Gastrocnemius medialis (tissue), 4 donors: ENCODE measurements at regions of chr9 and their contacts with region 1.

Region 1: GRCh38 chr9:136849038-136849959 is at the start of gene PHPT1:
- DNase-seq: peak; percentile 99
- ATAC-seq: peak; percentile 84 to 85
- H3K4me3 ChIP-seq: peak within 1 kb of the TSS; percentile 73 to 86 (median 82)
- H3K27ac ChIP-seq: peak within 1 kb of the TSS; percentile 89 to 97 (median 92)
- H3K4me1 ChIP-seq: peaks cover 20 to 32% of the 10 kb centered on the region in 2 donors
- H3K27me3 ChIP-seq: peaks cover 4 to 16% (median 11%) of the 10 kb centered on the region in 3 donors
- CTCF ChIP-seq: no peak
- POLR2A ChIP-seq: peak; percentile 85 to 91
- total RNA-seq, gene PHPT1: 98.8 to 204 (median 152) TPM

Region 2: DNA sequence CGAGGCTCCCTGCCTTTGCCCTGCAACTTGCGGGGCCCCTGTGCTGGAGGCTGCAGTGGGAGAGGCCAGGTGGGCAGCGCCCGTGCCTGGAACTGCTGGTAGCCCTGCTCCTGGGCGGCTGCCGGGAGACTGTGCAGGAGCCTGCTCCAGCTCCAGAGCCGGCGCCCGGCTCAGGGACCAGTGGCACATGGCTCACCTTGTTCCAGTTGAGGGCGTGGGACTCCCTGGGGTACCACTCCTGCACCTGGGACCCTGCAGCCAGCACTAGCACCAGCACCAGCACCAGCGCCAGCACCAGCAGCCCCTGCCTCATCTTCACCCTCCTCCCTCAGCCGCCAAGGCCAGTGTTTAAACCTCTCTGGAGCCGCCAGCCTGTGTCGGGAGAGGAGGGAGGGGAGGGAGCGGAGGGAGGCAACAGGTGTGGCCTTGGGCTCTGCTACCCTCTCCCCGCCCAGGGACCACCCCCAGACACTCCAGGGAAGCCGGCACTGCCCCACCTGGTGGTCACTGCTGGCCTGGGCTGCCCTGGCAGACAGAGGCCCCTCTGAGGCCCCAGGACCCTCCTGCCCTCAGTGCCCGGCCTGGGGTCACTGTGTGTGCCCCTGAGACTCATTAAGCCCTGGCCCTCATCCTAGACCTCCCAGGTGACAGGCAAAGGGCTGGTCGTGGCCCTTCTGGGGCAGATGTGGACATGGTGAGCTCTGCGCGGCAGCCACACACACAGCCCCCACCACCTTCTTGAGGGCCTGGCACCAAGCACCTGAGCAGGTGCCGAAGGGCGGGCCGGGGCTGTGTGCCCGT is 106.5 kb before region 1 on chr9 and contains the start of gene LCN10:
- in situ Hi-C with region 1: no loop called
- intact Hi-C with region 1: no loop called
- DNase-seq: no peak
- ATAC-seq: no peak
- H3K4me3 ChIP-seq: peak within 1 kb of the TSS in 1 of 4 donors; percentile 25
- H3K27ac ChIP-seq: no peak within 1 kb of the TSS
- H3K4me1 ChIP-seq: no peaks in the 10 kb centered on the region
- H3K27me3 ChIP-seq: peaks cover 28 to 42% (median 39%) of the 10 kb centered on the region in 3 donors
- CTCF ChIP-seq: no peak
- POLR2A ChIP-seq: no peak
- total RNA-seq, gene LCN10: 0.61 to 4.7 (median 1.6) TPM

Region 3: DNA sequence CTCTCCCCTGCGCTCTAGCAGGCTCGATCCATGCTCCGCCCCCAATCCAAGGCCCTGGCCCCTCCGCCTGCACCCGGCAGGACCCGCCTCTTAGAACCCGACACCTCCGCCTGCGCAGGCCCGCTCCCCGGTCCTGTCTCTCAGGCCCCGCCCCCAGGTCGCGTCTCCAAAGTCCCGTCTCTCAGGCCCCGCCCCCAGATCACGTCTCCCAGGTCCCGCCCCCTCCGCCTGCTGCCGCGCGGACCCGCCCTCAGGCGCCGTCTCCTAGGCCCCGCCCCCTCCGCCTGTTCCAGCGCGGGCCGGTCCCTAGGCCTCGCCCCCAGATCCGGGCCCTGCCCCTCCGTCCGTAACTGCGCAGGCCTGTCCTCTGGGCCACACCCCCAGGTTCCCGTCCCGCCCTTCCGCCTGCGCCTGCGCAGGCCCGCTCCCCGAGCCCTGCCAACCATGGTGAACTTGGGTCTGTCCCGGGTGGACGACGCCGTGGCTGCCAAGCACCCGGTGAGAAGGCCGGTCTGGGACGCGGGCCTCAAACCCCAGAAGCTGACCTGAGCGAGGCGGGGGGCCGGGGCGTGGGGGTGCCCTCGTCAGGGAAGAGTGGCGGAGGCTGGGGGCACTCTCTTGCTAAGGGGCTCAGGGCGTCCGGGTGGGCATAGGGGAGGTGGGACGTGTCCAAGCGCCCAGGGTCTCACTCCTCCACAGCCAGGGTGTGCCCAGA is 58.2 kb before region 1 on chr9 and contains the start of gene TMEM141:
- in situ Hi-C with region 1: no loop called
- intact Hi-C with region 1: loop called (anchors 5 kb)
- DNase-seq: peak; percentile 100
- ATAC-seq: peak; percentile 87 to 91
- H3K4me3 ChIP-seq: peak within 1 kb of the TSS; percentile 66 to 92 (median 81)
- H3K27ac ChIP-seq: peak within 1 kb of the TSS; percentile 94 to 99 (median 95)
- H3K4me1 ChIP-seq: peaks cover 12 to 18% of the 10 kb centered on the region in 2 donors
- H3K27me3 ChIP-seq: no peaks in the 10 kb centered on the region
- CTCF ChIP-seq: no peak
- POLR2A ChIP-seq: peak; percentile 60 to 82
- total RNA-seq, gene TMEM141: 46.9 to 70.2 (median 51.1) TPM

Region 4: DNA sequence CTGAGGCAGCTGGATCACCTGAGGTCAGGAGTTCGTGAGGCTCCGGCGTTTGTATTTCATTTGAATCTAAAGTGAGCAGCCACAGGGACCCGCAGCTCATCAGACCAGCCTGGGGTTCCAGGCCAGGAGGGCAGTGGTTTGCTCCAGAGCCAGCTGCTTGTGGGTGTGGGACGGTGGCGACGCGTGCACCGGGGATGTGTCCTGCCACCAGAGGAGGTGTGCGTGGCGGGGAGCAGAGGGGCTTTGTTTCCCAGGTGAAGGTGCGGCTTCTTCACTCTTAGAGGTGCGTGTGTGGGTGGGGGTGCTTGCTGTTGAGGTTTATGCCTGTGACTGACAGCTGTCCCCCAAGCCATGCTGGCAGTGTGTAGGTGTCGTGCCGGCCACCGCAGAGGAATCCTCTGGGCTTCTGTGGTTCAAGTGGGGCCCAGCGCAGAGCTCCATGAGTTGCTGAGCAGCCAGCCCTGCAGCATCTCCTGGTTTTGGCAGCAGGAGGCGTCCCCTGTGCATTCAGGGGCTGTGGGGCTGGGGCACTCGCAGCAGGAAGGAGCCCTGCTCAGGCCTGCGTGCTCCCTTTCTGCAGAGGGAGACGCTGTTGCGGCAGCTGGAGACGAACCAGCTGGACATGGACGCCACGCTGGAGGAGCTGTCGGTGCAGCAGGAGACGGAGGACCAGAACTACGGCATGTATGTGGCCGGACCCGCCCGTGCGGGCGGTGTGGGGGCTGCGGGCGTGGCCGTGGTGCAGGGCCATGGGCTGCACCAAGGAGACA is 14.0 kb before region 1 on chr9:
- in situ Hi-C with region 1: no loop called
- intact Hi-C with region 1: loop called (anchors 1 kb)
- DNase-seq: no peak
- ATAC-seq: no peak
- H3K4me3 ChIP-seq: no peak overlapping the region
- H3K27ac ChIP-seq: no peak overlapping the region
- H3K4me1 ChIP-seq: peaks cover 0 to 4% of the 10 kb centered on the region in 2 donors
- H3K27me3 ChIP-seq: no peaks in the 10 kb centered on the region
- CTCF ChIP-seq: no peak
- POLR2A ChIP-seq: no peak

Region 5: GRCh38 chr9:136885950-136886578 is 36.8 kb after region 1 on chr9 and contains the start of gene TRAF2:
- in situ Hi-C with region 1: no loop called
- intact Hi-C with region 1: loop called (anchors 1 kb)
- DNase-seq: peak; percentile 97 to 98
- ATAC-seq: peak; percentile 97 to 98
- H3K4me3 ChIP-seq: peak within 1 kb of the TSS; percentile 75 to 91 (median 82)
- H3K27ac ChIP-seq: peak within 1 kb of the TSS; percentile 84 to 92 (median 90)
- H3K4me1 ChIP-seq: peaks cover 13 to 14% of the 10 kb centered on the region in 2 donors
- H3K27me3 ChIP-seq: no peaks in the 10 kb centered on the region
- CTCF ChIP-seq: no peak
- POLR2A ChIP-seq: peak; percentile 58 to 81
- total RNA-seq, gene TRAF2: 3.5 to 6.6 (median 4.8) TPM

Region 6: DNA sequence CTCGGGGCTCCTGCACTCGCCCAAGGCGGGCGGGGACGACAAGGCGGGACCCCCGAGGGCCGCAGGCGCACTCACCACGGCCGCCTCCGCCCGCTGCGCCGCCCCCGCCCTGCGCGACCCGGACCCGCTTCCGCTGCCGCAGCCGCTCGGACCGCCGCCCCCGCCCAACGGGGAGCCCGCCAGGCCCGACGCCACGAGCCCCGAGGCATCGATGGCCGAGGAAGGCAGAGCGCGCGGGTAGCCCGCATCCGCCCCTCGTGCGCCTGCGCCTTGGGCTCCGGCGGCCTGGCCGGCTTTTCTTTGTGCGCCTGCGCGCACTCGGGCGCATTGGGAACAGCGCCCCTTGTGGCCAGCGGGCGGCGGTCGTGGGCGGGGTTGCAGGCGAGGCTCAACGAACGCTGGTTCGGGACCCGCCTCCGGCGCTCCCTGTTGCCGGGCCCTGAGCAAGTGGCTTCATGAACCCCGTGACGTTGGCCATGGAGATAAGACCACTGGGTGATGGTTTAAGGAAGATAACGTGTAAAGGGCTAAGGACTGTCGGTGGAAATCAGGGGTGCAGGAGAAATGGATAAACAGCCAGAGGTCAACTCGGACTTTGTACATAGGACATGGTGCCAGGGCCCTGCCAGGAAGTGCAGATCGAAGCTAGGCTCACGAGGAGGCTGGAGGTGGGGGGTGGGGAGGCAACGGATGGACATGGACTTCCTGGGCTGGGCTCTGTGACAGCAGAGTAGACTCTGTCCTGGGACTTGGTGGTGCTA is 95.4 kb after region 1 on chr9 and contains the starts of genes C8G and FBXW5:
- in situ Hi-C with region 1: no loop called
- intact Hi-C with region 1: loop called (anchors 2 kb)
- DNase-seq: peak; percentile 91 to 92
- ATAC-seq: peak; percentile 67 to 68
- H3K4me3 ChIP-seq: peak within 1 kb of the TSS; percentile 79 to 96 (median 92)
- H3K27ac ChIP-seq: peak within 1 kb of the TSS; percentile 92 to 97 (median 96)
- H3K4me1 ChIP-seq: peaks cover 27 to 60% of the 10 kb centered on the region in 2 donors
- H3K27me3 ChIP-seq: no peaks in the 10 kb centered on the region
- CTCF ChIP-seq: peak; percentile 96 to 100 (median 99)
- POLR2A ChIP-seq: peak; percentile 97 to 98
- total RNA-seq, gene C8G: 1.7 to 5.2 TPM in 2 of 4 donors, not detected in the others
- total RNA-seq, gene FBXW5: 329 to 469 (median 435) TPM

Region 7: DNA sequence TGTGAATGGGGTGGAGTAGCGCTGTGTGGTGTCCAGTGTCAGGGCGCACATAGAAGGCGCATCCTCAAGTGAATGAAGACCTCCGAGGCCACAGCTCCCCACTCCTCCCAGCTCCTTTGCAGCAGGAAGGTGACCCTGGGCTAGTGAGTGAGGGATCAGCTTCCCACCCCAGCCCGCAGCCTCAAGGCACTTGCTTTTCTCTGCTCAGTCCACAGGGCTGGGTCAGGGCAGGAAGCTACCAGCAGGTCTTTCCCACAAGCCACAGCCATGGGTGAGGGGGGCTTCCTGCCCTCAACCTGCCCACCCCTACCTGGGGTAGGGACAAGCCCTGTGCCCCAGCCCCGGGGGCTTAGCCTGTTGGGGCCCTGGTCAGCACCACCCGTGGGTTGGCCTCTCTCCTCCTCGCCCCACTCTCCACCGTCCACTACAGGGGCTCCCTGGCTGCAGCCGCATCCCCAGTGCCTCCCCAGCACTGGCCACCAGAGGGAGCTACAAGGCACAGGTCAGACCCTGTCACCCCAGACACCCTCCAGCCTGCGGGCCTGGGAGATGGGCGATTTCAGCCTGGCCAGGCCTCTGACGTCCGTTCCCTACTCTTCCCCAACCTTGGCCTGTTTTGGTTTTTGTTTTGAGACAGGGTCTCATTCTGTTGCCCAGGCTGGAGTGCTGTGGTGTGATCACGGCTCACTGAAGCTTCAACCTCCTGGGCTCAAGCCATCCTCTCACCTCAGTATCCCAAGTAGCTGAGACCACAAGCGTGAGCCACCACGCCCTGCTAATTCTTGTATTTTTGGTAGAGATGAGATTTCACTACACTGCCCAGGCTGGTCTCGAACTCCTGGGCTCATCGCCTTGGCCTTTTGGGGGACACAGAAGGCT is 180.0 kb after region 1 on chr9:
- in situ Hi-C with region 1: no loop called
- intact Hi-C with region 1: loop called (anchors 5 kb)
- DNase-seq: peak; percentile 45 to 60
- ATAC-seq: peak; percentile 50 to 60
- H3K4me3 ChIP-seq: peak overlapping the region; percentile 76 to 91 (median 79)
- H3K27ac ChIP-seq: no peak overlapping the region
- H3K4me1 ChIP-seq: peaks cover 20 to 23% of the 10 kb centered on the region in 2 donors
- H3K27me3 ChIP-seq: no peaks in the 10 kb centered on the region
- CTCF ChIP-seq: peak; percentile 64 to 91 (median 87)
- POLR2A ChIP-seq: no peak